ENCODE measurements at regions of chr1 and their contacts with region 1.

Region 1: DNA sequence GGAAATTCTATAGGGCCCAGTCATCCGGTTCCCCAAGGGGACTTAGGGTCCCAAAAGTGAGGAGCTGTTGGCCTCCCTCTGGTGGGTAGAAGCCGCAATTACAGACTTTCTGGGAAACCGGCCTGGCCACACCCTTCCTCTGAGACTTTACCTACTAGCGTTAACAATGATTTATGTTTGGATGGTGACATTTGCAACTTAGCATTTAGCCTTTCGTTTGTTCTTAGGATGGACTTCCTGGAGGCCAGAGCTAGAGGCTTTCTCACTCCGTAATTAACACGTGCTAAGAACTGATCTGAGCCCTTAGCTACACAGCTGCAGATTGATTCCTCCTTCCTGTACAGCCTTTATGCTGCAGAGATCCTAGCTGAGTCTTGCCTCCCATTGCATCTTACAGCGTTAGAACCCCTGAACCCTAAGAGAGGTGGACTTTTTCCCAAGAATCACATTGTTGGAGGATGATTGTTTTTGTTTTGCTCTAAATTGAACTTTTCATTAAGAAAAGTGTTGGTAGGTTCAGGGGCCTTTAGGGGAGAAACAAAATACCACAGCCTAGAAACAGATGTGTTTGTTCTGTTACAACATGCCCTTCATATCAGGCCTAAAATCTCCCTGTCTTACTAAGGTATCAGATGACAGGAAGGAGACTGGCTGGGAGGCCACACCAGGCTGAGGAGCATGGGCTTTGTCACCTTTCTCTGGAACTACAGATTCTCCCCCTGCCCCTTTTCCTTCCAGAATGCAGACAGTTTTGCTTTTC is 2.0 kb downstream of the S100A11 start:
- DNase-seq: peak; percentile 73
- H3K4me3 Mint-ChIP-seq: peak overlapping the region; percentile 98
- H3K27ac Mint-ChIP-seq: peak overlapping the region; percentile 99
- H3K4me1 Mint-ChIP-seq: peaks cover 51% of the 10 kb centered on the region
- H3K27me3 Mint-ChIP-seq: no peaks in the 10 kb centered on the region

Region 2: GRCh38 chr1:152024158-152024557 is 10.7 kb before region 1 on chr1:
- CTCF ChIA-PET with region 1: interaction called, 16 read pairs
- POLR2A ChIA-PET with region 1: no interaction called
- DNase-seq: no peak
- H3K4me3 Mint-ChIP-seq: no peak overlapping the region
- H3K27ac Mint-ChIP-seq: no peak overlapping the region
- H3K4me1 Mint-ChIP-seq: peaks cover 7% of the 10 kb centered on the region
- H3K27me3 Mint-ChIP-seq: no peaks in the 10 kb centered on the region

Region 3: GRCh38 chr1:152047730-152048402 is 13.0 kb after region 1 on chr1:
- CTCF ChIA-PET with region 1: interaction called, 68 read pairs
- POLR2A ChIA-PET with region 1: no interaction called
- DNase-seq: peak; percentile 91
- H3K4me3 Mint-ChIP-seq: peak overlapping the region; percentile 62
- H3K27ac Mint-ChIP-seq: peak overlapping the region; percentile 99
- H3K4me1 Mint-ChIP-seq: peaks cover 57% of the 10 kb centered on the region
- H3K27me3 Mint-ChIP-seq: peaks cover 6% of the 10 kb centered on the region